ENCODE measurements at regions of chr12 and their contacts with region 1.

Region 1: GRCh38 chr12:126974779-126975178 is 1292.2 kb upstream of the TMEM132C start:
- DNase-seq: peak in 3 of 4 experiments; percentile 13 to 71 (median 48)
- ATAC-seq: peak; percentile 99
- H3K4me3 ChIP-seq: no peak overlapping the region
- H3K27ac ChIP-seq: no peak overlapping the region
- H3K4me1 ChIP-seq: no peaks in the 10 kb centered on the region; a peak in 1 of 5 replicates
- H3K27me3 ChIP-seq: no peaks in the 10 kb centered on the region
- CTCF ChIP-seq: peak; percentile 71 to 98 (median 96)
- EP300 ChIP-seq: no peak
- POLR2A ChIP-seq: no peak
- RAD21 ChIP-seq: peak; percentile 55 to 77

Region 2: DNA sequence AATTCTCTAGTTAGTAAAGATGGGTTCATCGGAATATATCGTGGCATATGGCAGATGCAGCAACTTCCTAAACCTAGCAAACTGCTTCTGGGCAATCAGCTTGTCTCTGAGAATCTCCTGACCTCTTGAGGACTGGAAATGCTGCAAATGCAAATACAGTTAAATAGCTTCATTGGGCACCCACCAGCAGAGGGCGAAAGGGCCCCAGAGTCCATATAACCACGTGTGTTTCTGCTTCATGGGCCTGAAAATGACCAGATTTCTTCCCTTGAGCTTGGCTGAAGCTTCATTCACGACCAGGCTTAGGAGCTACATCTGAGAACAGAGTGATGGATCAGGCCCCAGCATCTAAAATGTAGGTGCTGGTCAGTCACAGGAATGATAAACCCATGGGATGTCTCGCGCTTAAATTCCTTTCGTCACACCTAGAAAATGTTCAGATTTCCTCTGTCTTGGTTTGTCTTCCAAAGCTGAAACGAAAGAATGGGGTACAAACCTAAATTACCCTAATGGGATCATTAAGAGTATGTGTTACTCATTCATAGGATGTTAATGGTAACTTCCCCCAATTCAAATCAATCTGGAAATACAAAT is 190.4 kb before region 1 on chr12:
- CTCF ChIA-PET with region 1: no interaction called
- POLR2A ChIA-PET with region 1: no interaction called
- in situ Hi-C with region 1: no loop called
- intact Hi-C with region 1: loop called (anchors 1 kb)
- DNase-seq: peak; percentile 31 to 79 (median 47)
- ATAC-seq: peak; percentile 93
- H3K4me3 ChIP-seq: no peak overlapping the region
- H3K27ac ChIP-seq: no peak overlapping the region
- H3K4me1 ChIP-seq: no peaks in the 10 kb centered on the region; a peak in 2 of 5 replicates
- H3K27me3 ChIP-seq: peaks cover 0 to 4% of the 10 kb centered on the region in 2 experiments; a peak in 3 of 5 replicates
- CTCF ChIP-seq: peak; percentile 87 to 94 (median 92)
- EP300 ChIP-seq: no peak
- POLR2A ChIP-seq: no peak
- RAD21 ChIP-seq: peak; percentile 72 to 88

Region 3: GRCh38 chr12:126889501-126889900 is 85.3 kb before region 1 on chr12:
- CTCF ChIA-PET with region 1: no interaction called
- POLR2A ChIA-PET with region 1: interaction called, 3 read pairs
- in situ Hi-C with region 1: no loop called
- intact Hi-C with region 1: loop called (anchors 5 kb)
- DNase-seq: no peak
- ATAC-seq: no peak
- H3K4me3 ChIP-seq: no peak overlapping the region
- H3K27ac ChIP-seq: no peak overlapping the region
- H3K4me1 ChIP-seq: no peaks in the 10 kb centered on the region
- H3K27me3 ChIP-seq: no peaks in the 10 kb centered on the region
- CTCF ChIP-seq: no peak
- EP300 ChIP-seq: no peak
- POLR2A ChIP-seq: no peak
- RAD21 ChIP-seq: no peak

Region 4: GRCh38 chr12:126926023-126926594 is 48.7 kb before region 1 on chr12:
- CTCF ChIA-PET with region 1: no interaction called
- POLR2A ChIA-PET with region 1: no interaction called
- in situ Hi-C with region 1: no loop called
- intact Hi-C with region 1: loop called (anchors 5 kb)
- DNase-seq: peak in 1 of 4 experiments; percentile 39
- ATAC-seq: peak; percentile 86
- H3K4me3 ChIP-seq: no peak overlapping the region
- H3K27ac ChIP-seq: no peak overlapping the region
- H3K4me1 ChIP-seq: no peaks in the 10 kb centered on the region; a peak in 1 of 5 replicates
- H3K27me3 ChIP-seq: no peaks in the 10 kb centered on the region
- CTCF ChIP-seq: peak in 2 of 3 experiments; percentile 16 to 57; a peak in 3 of 6 replicates
- EP300 ChIP-seq: no peak
- POLR2A ChIP-seq: no peak
- RAD21 ChIP-seq: peak; percentile 59 to 78